ENCODE measurements at regions of chr1 and their contacts with region 1.

Region 1: DNA sequence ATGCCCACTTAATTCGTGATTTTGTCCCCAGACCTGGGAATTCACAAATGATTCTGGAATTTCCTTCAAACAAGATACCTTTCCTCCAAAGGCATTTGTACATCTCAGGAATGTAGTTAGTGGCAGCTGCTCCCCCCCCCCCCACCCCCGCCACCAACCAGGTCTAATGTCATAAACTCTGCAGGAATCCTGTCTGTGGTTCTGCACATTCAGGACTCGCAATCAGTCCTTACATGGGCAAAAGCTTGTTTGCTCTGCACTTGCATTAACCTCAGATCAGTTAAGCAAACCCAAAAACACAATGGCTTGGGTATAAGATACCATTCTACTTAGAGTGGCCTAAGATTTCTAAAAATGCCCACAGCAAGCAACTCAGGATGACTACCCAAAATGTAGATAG is 143.8 kb downstream of the TGFB2 start:
- DNase-seq: peak; percentile 69 to 98
- H3K4me3 ChIP-seq: no peak overlapping the region
- H3K27ac ChIP-seq: peak overlapping the region; percentile 92
- H3K4me1 ChIP-seq: peaks cover 75% of the 10 kb centered on the region
- H3K27me3 ChIP-seq: no peaks in the 10 kb centered on the region
- CTCF ChIP-seq: no peak

Region 2: DNA sequence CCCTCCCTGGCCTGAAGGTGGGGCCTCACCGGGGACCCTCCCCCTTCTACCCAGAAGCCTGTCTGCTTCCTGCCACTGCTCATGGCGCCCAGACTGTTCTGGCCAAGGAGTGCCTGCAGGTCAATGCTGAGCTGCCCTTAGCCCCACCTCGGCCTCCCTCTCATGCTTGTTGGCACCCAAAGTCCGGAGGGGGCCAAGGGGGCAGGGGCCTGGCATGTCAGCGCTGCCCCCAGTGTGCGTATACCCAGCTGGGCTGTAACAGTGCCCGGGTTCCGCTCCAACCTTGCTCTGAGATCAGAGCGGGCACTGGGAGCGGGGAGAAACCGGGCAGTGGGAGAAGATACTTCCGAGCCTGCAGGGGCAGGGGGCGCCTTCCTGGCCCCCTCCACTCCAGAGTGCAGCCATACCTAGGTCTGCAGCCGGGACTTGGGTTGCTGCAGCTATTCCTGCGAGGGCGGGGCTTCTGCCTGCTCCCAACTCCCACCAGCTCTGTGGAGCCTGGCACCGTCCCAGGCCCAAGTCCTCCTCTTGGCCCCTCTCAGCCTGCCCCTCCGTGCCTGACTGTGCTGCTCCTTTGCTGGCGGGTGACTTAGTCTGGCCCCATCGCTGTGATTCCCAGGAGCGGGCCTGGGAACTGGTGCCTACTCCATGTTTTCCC is 165.3 kb before region 1 on chr1:
- CTCF ChIA-PET with region 1: no interaction called
- POLR2A ChIA-PET with region 1: no interaction called
- intact Hi-C with region 1: no loop called
- DNase-seq: no peak
- H3K4me3 ChIP-seq: no peak overlapping the region
- H3K27ac ChIP-seq: no peak overlapping the region
- H3K4me1 ChIP-seq: no peaks in the 10 kb centered on the region
- H3K27me3 ChIP-seq: no peaks in the 10 kb centered on the region
- CTCF ChIP-seq: no peak

Region 3: DNA sequence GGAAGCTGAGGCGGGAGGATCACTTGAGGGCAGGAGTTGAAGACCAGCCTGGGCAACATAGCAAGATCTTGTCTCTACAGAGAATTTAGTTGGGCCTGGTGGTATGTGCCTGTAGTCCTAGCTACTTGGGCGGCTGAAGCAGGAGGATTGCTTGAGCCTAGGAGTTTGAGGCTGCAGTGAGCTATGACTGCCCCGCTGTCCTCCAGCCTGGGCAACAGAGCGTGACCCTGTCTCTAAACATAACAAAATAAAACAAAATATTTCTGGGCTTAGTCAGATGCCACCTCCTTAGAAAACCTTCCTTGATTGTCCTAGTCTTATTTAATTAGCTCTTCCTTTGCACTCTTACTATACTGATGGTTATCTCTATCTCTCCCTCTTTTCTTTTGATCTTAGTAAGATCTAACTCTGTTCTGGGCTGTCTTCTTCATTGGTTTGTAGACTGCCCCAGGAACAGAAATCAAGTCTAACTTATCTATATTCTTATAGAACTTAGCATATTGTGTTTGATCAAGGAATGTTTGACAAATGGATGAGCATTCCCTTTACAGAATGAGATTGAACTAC is 135.2 kb before region 1 on chr1:
- CTCF ChIA-PET with region 1: no interaction called
- POLR2A ChIA-PET with region 1: interaction called, 30 read pairs
- intact Hi-C with region 1: no loop called
- DNase-seq: peak; percentile 25 to 48
- H3K4me3 ChIP-seq: no peak overlapping the region
- H3K27ac ChIP-seq: no peak overlapping the region
- H3K4me1 ChIP-seq: peaks cover 42% of the 10 kb centered on the region
- H3K27me3 ChIP-seq: no peaks in the 10 kb centered on the region
- CTCF ChIP-seq: no peak

Region 4: GRCh38 chr1:218377143-218377660 is 111.8 kb before region 1 on chr1:
- CTCF ChIA-PET with region 1: interaction called, 4 read pairs
- POLR2A ChIA-PET with region 1: no interaction called
- intact Hi-C with region 1: loop called (anchors 1 kb)
- DNase-seq: peak; percentile 87 to 96
- H3K4me3 ChIP-seq: peak overlapping the region; percentile 36
- H3K27ac ChIP-seq: peak overlapping the region; percentile 91
- H3K4me1 ChIP-seq: peaks cover 80% of the 10 kb centered on the region
- H3K27me3 ChIP-seq: no peaks in the 10 kb centered on the region
- CTCF ChIP-seq: no peak

Region 5: DNA sequence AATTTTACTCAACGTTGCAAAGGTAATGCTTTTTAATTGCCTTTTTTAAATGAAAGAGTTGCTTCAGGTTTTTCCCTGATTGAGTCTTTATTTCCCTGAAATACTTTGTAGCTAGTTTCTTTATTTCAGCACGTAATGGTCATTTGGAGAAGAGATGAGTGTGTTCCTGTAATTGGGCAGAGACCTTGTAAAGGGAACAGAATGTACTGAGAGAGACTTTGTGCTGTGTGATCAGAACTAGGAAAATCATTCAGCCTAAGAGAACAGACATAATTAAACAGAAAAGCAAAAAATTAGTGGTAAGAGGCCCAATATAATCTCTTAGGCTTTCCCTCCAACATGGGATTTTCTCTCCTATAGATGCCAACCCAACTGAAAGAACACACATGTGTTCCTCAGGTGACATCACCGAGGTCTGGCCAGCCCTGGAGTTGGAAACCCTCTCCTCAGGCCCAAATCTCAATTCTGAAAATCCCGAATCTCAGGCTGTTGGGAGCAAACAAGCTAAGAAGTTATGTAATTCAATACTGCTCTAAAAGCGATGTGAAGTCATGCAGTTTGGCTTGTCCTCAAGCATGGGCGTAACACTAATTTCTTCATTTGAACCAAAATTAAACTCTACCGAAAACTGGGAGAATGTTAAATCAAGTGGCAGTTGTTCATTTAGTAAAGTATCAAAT is 41.8 kb before region 1 on chr1:
- CTCF ChIA-PET with region 1: no interaction called
- POLR2A ChIA-PET with region 1: no interaction called
- intact Hi-C with region 1: loop called (anchors 5 kb)
- DNase-seq: no peak
- H3K4me3 ChIP-seq: no peak overlapping the region
- H3K27ac ChIP-seq: no peak overlapping the region
- H3K4me1 ChIP-seq: no peaks in the 10 kb centered on the region
- H3K27me3 ChIP-seq: no peaks in the 10 kb centered on the region
- CTCF ChIP-seq: no peak

Region 6: DNA sequence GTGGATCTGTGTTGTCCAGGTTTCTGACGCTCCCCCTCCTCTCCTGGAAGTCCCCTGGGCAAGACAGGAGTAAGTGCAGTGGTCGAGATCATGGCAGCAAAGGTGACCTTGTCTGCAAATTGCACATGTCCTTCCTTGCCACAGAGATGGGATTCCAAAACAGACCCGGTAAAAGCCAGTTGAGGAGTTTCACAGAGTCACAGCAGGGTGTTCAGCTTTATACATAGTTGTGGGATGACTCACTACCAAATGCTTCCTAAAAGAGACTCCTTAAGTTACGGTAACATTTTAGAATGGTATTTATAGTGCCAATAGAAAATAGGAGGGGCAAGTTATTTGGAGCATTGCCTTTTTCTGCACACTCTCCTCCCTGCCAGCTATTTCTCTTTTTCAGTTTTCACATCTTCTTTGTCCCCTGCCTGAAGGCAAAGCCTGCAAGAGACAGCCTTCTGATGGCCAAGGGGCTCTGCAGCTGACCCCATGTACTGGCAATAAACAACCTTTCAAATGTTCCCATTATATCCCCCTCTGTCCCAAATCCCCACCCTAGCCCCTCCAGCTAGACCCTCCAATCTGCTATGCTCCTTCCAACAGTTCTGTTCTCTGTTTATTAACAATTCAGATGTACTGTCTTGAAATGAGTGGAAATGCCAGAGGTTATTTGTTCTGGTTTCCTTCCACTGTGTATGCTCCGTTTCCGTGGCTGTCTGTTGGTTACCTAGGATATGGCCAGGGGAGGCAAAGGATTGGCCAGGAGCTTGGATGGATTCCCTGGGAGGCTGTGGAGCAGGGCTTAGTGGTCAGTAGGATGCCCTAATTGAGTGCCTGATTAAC is 28.9 kb before region 1 on chr1:
- CTCF ChIA-PET with region 1: no interaction called
- POLR2A ChIA-PET with region 1: interaction called, 5 read pairs
- intact Hi-C with region 1: loop called (anchors 1 kb)
- DNase-seq: peak; percentile 68 to 93
- H3K4me3 ChIP-seq: no peak overlapping the region
- H3K27ac ChIP-seq: peak overlapping the region; percentile 63
- H3K4me1 ChIP-seq: peaks cover 14% of the 10 kb centered on the region
- H3K27me3 ChIP-seq: no peaks in the 10 kb centered on the region
- CTCF ChIP-seq: no peak

Region 7: DNA sequence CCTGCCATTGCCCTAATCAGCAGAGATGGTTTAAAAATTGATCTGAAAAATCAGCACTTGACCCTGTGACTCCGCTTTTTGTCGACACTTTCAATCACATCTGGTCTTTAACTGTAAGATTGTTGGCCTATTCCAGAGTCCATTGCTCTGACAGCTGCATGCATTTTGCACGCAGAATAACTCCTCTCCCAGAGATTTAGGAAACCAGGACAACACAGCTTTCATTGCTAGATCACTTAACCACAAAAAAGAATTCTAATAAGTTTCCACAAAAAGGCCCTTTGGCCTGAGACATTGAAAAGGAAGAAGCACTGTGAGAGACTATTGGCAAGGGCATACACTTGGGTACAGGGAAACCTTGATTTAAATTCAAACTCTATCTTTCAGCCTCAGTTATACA is 229.2 kb after region 1 on chr1:
- CTCF ChIA-PET with region 1: no interaction called
- POLR2A ChIA-PET with region 1: no interaction called
- intact Hi-C with region 1: no loop called
- DNase-seq: no peak
- H3K4me3 ChIP-seq: no peak overlapping the region
- H3K27ac ChIP-seq: no peak overlapping the region
- H3K4me1 ChIP-seq: no peaks in the 10 kb centered on the region
- H3K27me3 ChIP-seq: no peaks in the 10 kb centered on the region
- CTCF ChIP-seq: no peak